Activated CD8-positive, alpha-beta memory T cell treated with anti-CD3 and anti-CD28 coated beads, Interleukin-2, amount 10 ng/mL, durations not matched to agents 7 days and 5 days (primary cell): ENCODE measurements at regions of chr12 and their contacts with region 1.

Region 1: DNA sequence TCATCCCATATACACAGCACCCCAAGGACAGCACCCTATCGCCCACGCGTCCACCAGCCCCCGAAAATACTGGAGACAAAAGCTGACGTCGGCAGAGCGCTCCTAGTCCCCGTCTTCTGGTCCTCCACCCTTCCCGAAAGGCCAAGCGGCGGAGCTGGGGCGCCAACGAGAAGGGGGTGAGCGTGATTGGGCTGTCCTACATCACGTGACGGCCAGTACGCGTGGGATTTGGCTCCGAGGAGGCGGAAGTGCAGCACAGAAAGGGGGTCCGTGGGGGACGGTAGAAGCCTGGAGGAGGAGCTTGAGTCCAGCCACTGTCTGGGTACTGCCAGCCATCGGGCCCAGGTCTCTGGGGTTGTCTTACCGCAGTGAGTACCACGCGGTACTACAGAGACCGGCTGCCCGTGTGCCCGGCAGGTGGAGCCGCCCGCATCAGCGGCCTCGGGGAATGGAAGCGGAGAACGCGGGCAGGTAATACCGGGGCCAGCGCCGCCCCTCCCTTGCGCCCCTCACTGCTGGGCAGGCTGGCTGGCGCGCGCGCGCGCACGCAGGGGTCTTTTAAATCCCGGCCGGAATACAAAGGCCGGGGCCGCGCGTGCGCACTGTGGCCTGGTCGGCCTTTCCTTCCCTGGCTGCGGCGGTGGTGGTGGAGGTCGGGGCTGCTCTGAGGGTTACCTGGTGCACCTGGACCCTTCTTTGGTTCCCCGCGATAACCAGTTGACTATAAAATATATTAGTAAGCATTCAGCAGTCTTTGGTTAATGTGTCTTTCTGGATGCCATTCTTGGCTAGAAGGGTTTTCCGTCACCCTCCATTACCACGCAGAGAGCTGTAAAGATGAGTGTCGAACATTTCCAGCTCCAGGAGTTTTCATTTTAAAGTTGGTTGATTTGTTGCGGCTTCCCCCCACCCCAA is at the start of gene TDG:
- DNase-seq: peak; percentile 99
- ATAC-seq: peak; percentile 97
- H3K4me3 Mint-ChIP-seq: peak within 1 kb of the TSS; percentile 99
- H3K27ac Mint-ChIP-seq: peak within 1 kb of the TSS; percentile 98
- H3K4me1 Mint-ChIP-seq: peaks cover 47% of the 10 kb centered on the region
- H3K27me3 Mint-ChIP-seq: no peaks in the 10 kb centered on the region
- total RNA-seq, gene TDG: 29.4 to 46.5 TPM

Region 2: GRCh38 chr12:103833095-103833775 is 132.6 kb before region 1 on chr12:
- CTCF ChIA-PET with region 1: no interaction called
- DNase-seq: no peak
- ATAC-seq: no peak
- H3K4me3 Mint-ChIP-seq: no peak overlapping the region
- H3K27ac Mint-ChIP-seq: no peak overlapping the region
- H3K4me1 Mint-ChIP-seq: no peaks in the 10 kb centered on the region
- H3K27me3 Mint-ChIP-seq: no peaks in the 10 kb centered on the region

Region 3: DNA sequence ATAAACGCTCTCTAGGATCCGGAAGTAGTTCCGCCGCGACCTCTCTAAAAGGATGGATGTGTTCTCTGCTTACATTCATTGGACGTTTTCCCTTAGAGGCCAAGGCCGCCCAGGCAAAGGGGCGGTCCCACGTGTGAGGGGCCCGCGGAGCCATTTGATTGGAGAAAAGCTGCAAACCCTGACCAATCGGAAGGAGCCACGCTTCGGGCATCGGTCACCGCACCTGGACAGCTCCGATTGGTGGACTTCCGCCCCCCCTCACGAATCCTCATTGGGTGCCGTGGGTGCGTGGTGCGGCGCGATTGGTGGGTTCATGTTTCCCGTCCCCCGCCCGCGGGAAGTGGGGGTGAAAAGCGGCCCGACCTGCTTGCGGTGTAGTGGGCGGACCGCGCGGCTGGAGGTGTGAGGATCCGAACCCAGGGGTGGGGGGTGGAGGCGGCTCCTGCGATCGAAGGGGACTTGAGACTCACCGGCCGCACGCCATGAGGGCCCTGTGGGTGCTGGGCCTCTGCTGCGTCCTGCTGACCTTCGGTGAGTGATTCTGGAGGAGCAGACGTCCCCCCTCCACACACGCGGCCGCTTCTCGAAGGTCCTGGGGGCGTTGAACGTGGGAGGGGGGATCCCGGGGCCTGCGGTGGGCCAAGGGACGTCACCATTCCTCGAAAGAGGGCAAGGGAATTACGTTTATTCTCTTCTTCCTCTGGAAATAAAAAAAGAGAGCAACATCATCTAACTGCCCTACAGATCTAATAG is 35.6 kb before region 1 on chr12 and contains the start of gene HSP90B1:
- CTCF ChIA-PET with region 1: interaction called, 12 read pairs
- DNase-seq: peak; percentile 100
- ATAC-seq: peak; percentile 80
- H3K4me3 Mint-ChIP-seq: peak within 1 kb of the TSS; percentile 89
- H3K27ac Mint-ChIP-seq: peak within 1 kb of the TSS; percentile 97
- H3K4me1 Mint-ChIP-seq: peaks cover 63% of the 10 kb centered on the region
- H3K27me3 Mint-ChIP-seq: peaks cover 3% of the 10 kb centered on the region
- total RNA-seq, gene HSP90B1: 324 to 489 TPM

Region 4: GRCh38 chr12:104003596-104003995 is 37.7 kb after region 1 on chr12:
- CTCF ChIA-PET with region 1: no interaction called
- DNase-seq: no peak
- ATAC-seq: no peak
- H3K4me3 Mint-ChIP-seq: no peak overlapping the region
- H3K27ac Mint-ChIP-seq: no peak overlapping the region
- H3K4me1 Mint-ChIP-seq: no peaks in the 10 kb centered on the region
- H3K27me3 Mint-ChIP-seq: peaks cover 66% of the 10 kb centered on the region